CD8-positive, alpha-beta T cell (primary cell): ENCODE measurements at regions of chr3 and their contacts with region 1.

Region 1: DNA sequence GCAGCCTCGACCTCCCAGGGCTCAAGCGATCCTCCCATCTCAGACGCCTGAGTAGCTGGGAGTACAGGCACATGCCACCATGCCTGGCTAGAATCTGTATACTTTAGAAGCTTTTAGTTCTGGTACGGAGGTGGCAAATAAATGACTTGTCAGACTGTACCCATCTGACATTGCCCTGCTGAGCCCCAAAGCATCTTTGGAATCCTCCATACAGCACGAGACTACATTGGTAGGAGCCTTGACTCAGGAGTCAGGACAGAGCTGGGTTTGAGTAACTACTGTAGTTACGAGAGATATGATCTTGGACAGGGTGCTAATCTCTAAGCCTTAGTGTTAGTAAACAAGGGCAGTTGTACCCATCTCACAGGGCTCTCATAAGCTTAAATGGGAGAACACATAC is 67.8 kb upstream of the NPHP3 start:
- DNase-seq: no peak
- ATAC-seq: no peak
- H3K4me3 ChIP-seq: no peak overlapping the region
- H3K4me3 Mint-ChIP-seq: no peak overlapping the region
- H3K27ac ChIP-seq: no peak overlapping the region
- H3K27ac Mint-ChIP-seq: no peak overlapping the region
- H3K4me1 ChIP-seq: no peaks in the 10 kb centered on the region
- H3K4me1 Mint-ChIP-seq: no peaks in the 10 kb centered on the region
- H3K27me3 ChIP-seq: no peaks in the 10 kb centered on the region
- H3K27me3 Mint-ChIP-seq: peaks cover 28% of the 10 kb centered on the region
- CTCF ChIP-seq: no peak

Region 2: DNA sequence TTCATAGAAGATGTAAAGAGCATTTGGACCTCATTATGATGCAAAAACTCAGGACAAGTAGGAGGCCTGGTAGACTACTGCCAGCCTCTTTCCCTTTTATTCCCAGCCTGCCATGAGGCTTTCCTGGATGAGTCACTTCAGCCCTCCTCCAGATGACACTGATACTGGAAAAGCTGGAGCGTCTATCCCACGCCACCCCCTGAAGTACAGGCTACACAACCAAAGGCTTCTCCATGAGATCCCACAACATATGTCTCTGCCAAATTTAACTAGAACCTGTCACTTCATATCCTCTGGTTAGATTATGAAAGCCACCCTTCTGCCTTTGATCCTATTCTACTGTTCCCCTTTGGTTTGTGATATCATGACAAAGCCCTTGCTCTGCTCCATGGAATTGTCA is 699.0 kb before region 1 on chr3:
- CTCF ChIA-PET with region 1: no interaction called
- POLR2A ChIA-PET with region 1: no interaction called
- intact Hi-C with region 1: loop called in 1 of 2 experiments (anchors 10 kb)
- DNase-seq: no peak
- ATAC-seq: no peak
- H3K4me3 ChIP-seq: no peak overlapping the region
- H3K4me3 Mint-ChIP-seq: no peak overlapping the region
- H3K27ac ChIP-seq: no peak overlapping the region
- H3K27ac Mint-ChIP-seq: no peak overlapping the region
- H3K4me1 ChIP-seq: no peaks in the 10 kb centered on the region
- H3K4me1 Mint-ChIP-seq: no peaks in the 10 kb centered on the region
- H3K27me3 ChIP-seq: no peaks in the 10 kb centered on the region
- H3K27me3 Mint-ChIP-seq: peaks cover 2% of the 10 kb centered on the region
- CTCF ChIP-seq: no peak